Naive thymus-derived CD4-positive, alpha-beta T cell (primary cell): ENCODE measurements at regions of chr1 and their contacts with region 1.

Region 1: DNA sequence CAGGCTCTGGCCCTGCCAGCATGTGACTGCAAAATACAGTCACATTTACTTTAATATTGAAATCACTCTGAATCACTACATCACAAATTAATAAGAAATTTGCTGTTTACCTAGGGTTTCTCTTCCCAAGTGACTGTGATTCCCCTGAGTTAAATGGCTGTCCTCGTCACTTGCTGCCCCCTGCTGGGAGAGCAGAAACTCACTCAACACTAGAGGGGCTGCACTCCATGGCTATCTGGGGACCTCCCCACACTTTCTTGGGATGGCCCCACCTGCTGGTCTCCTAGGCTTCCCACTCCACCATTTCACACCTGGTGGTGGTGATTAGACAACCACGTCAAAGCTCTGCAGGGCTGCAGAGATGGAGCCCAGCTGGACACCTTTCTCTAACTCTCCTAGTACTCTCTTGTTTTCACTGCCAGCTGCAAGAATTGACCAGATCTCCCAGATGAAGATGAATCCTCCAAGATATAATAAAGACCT is 63.4 kb downstream of the CD2 start:
- DNase-seq: peak; percentile 43 to 67 (median 63)
- ATAC-seq: peak; percentile 85
- H3K4me3 ChIP-seq: no peak overlapping the region
- H3K4me3 Mint-ChIP-seq: peak overlapping the region; percentile 4 to 75 (median 58)
- H3K27ac ChIP-seq: no peak overlapping the region
- H3K27ac Mint-ChIP-seq: peak overlapping the region in 8 of 9 donors; percentile 22 to 85 (median 82)
- H3K4me1 ChIP-seq: peaks cover 23 to 33% of the 10 kb centered on the region in 2 donors
- H3K4me1 Mint-ChIP-seq: peaks cover 20 to 58% (median 34%) of the 10 kb centered on the region in 7 donors
- H3K27me3 ChIP-seq: no peaks in the 10 kb centered on the region
- H3K27me3 Mint-ChIP-seq: no peaks in the 10 kb centered on the region

Region 2: GRCh38 chr1:116724765-116725375 is 92.8 kb before region 1 on chr1:
- CTCF ChIA-PET with region 1: interaction called, 9 read pairs
- POLR2A ChIA-PET with region 1: no interaction called
- intact Hi-C with region 1: loop called in 1 of 2 experiments (anchors 1 kb)
- DNase-seq: peak; percentile 45 to 74 (median 70)
- ATAC-seq: peak; percentile 77
- H3K4me3 ChIP-seq: no peak overlapping the region
- H3K4me3 Mint-ChIP-seq: no peak overlapping the region
- H3K27ac ChIP-seq: no peak overlapping the region
- H3K27ac Mint-ChIP-seq: no peak overlapping the region
- H3K4me1 ChIP-seq: no peaks in the 10 kb centered on the region
- H3K4me1 Mint-ChIP-seq: peaks cover 4 to 27% (median 13%) of the 10 kb centered on the region in 7 donors
- H3K27me3 ChIP-seq: no peaks in the 10 kb centered on the region
- H3K27me3 Mint-ChIP-seq: no peaks in the 10 kb centered on the region

Region 3: DNA sequence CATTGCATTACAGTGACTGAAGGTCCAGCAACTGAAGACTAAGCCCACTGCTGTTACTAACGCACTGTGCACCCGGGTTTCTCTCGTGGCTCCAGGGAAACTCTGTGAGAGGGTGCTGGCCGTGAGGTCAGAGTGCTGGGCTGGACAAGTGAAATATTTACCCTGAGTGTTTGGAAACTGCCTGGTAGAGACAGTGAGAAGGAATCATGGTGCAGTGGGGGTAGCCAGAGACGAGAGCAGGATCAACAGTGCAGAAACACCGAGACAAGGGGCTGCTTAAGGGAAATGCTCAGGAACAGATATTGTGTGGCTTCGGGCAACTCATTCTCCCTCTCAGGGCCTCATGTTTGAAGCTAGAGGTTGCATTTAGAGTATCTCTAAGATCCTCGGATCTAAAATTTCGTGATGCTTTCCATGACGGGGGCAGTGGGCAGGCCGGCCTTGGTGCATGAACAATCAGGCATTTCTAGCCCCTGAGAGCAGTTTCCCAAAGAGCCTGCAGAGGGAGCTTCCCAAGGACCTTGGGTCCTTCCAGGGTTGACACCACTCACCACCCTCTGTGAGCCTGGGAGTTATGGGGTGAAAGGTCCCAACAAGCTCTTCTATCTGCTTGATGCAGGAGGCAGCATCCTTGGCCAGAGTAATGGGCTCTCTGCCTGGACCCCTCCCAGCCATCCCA is 53.7 kb before region 1 on chr1:
- CTCF ChIA-PET with region 1: interaction called, 26 read pairs
- POLR2A ChIA-PET with region 1: interaction called, 107 read pairs
- intact Hi-C with region 1: loop called (anchors 1 kb)
- DNase-seq: peak in 2 of 9 donors; percentile 64 to 66
- ATAC-seq: peak; percentile 10
- H3K4me3 ChIP-seq: peak overlapping the region; percentile 17
- H3K4me3 Mint-ChIP-seq: peak overlapping the region; percentile 79 to 99 (median 85)
- H3K27ac ChIP-seq: peak overlapping the region; percentile 89
- H3K27ac Mint-ChIP-seq: peak overlapping the region; percentile 93 to 100 (median 97)
- H3K4me1 ChIP-seq: peaks cover 94 to 100% of the 10 kb centered on the region in 2 donors
- H3K4me1 Mint-ChIP-seq: peaks cover 74 to 100% (median 94%) of the 10 kb centered on the region in 7 donors
- H3K27me3 ChIP-seq: no peaks in the 10 kb centered on the region
- H3K27me3 Mint-ChIP-seq: no peaks in the 10 kb centered on the region

Region 4: DNA sequence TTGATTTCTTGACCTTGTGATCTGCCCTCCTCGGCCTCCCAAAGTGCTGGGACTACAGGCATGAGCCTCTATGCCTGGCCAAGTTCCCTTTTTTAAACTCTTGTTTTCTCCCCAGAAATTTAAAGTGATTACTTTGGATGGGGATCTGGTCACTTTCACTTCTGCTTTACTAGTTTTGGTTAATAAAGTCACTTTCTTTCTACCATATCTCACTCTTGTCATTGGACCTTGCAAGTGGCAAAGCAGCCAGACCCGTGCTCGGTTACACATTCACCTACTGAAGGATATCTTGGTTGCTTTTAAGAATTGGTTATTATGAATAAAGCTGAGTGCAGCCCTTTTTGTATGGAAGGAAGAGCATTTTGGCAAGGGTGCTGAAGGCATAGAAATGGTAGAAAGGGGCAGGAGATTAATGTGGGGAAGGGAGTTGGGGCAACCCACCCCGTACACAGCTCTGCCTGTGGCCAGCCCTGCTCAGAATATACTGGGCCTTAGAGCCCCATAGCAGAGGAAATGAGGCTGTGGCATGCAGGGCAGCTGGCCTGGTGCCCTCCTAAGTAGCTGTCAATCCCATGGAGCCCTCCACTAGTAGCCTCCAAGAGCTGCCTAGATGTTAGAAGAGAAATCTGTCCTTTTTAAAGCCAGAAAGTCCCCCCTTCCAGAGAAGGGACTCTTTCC is 22.7 kb before region 1 on chr1:
- CTCF ChIA-PET with region 1: interaction called, 5 read pairs
- POLR2A ChIA-PET with region 1: interaction called, 5 read pairs
- intact Hi-C with region 1: loop called in 1 of 2 experiments (anchors 2 kb)
- DNase-seq: no peak
- ATAC-seq: peak; percentile 62
- H3K4me3 ChIP-seq: no peak overlapping the region
- H3K4me3 Mint-ChIP-seq: no peak overlapping the region
- H3K27ac ChIP-seq: no peak overlapping the region
- H3K27ac Mint-ChIP-seq: peak overlapping the region in 5 of 9 donors; percentile 26 to 61 (median 45)
- H3K4me1 ChIP-seq: peaks cover 24 to 29% of the 10 kb centered on the region in 2 donors
- H3K4me1 Mint-ChIP-seq: peaks cover 43 to 68% (median 60%) of the 10 kb centered on the region in 7 donors
- H3K27me3 ChIP-seq: no peaks in the 10 kb centered on the region
- H3K27me3 Mint-ChIP-seq: no peaks in the 10 kb centered on the region

Region 5: GRCh38 chr1:116881879-116882520 is 64.4 kb after region 1 on chr1:
- CTCF ChIA-PET with region 1: no interaction called
- POLR2A ChIA-PET with region 1: no interaction called
- intact Hi-C with region 1: loop called (anchors 2 to 5 kb)
- DNase-seq: peak in 3 of 9 donors; percentile 14 to 40 (median 19)
- ATAC-seq: no peak
- H3K4me3 ChIP-seq: no peak overlapping the region
- H3K4me3 Mint-ChIP-seq: no peak overlapping the region
- H3K27ac ChIP-seq: no peak overlapping the region
- H3K27ac Mint-ChIP-seq: peak overlapping the region in 2 of 9 donors; percentile 44 to 60
- H3K4me1 ChIP-seq: peaks cover 11 to 20% of the 10 kb centered on the region in 2 donors
- H3K4me1 Mint-ChIP-seq: peaks cover 0 to 26% (median 0%) of the 10 kb centered on the region in 7 donors
- H3K27me3 ChIP-seq: no peaks in the 10 kb centered on the region
- H3K27me3 Mint-ChIP-seq: no peaks in the 10 kb centered on the region

Region 6: GRCh38 chr1:117051224-117052064 is 233.8 kb after region 1 on chr1:
- CTCF ChIA-PET with region 1: interaction called, 5 read pairs
- POLR2A ChIA-PET with region 1: interaction called, 3 read pairs
- intact Hi-C with region 1: loop called (anchors 1 to 2 kb)
- DNase-seq: peak in 6 of 9 donors; percentile 13 to 34 (median 28)
- ATAC-seq: peak; percentile 34
- H3K4me3 ChIP-seq: peak overlapping the region; percentile 26
- H3K4me3 Mint-ChIP-seq: peak overlapping the region; percentile 49 to 94 (median 84)
- H3K27ac ChIP-seq: peak overlapping the region; percentile 54
- H3K27ac Mint-ChIP-seq: peak overlapping the region; percentile 87 to 99 (median 95)
- H3K4me1 ChIP-seq: peaks cover 6 to 45% of the 10 kb centered on the region in 2 donors
- H3K4me1 Mint-ChIP-seq: peaks cover 30 to 66% (median 58%) of the 10 kb centered on the region in 7 donors
- H3K27me3 ChIP-seq: no peaks in the 10 kb centered on the region
- H3K27me3 Mint-ChIP-seq: no peaks in the 10 kb centered on the region